ENCODE measurements at regions of chr11 and their contacts with region 1.

Region 1: DNA sequence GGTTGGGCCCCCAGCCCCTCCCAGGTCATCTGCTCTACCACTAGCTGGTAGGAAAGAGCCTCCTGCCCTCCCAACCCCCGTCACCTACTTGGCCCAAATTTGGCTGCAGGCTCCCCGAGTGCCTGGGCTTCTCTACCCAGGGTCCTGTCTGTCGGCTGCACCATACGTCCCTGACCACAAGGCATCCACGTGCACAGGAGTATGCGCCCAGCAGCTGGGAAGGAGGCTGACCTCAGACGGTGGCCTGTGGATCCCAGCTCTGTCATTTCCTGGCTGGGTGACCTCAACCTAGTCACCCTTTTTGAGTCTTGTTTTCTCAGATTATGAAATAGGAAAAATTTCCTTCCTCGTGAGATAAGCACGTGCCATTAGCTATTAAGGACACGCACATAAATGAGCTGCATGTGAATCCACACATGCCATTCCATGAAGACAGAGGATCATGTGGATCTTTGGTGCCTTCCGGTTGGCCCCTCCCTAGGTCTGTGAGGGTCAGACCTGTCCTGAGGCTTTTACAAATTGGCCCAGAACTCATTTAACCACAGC is 13.7 kb downstream of the CYB561A3 start:
- DNase-seq: no peak
- CTCF ChIP-seq: no peak

Region 2: DNA sequence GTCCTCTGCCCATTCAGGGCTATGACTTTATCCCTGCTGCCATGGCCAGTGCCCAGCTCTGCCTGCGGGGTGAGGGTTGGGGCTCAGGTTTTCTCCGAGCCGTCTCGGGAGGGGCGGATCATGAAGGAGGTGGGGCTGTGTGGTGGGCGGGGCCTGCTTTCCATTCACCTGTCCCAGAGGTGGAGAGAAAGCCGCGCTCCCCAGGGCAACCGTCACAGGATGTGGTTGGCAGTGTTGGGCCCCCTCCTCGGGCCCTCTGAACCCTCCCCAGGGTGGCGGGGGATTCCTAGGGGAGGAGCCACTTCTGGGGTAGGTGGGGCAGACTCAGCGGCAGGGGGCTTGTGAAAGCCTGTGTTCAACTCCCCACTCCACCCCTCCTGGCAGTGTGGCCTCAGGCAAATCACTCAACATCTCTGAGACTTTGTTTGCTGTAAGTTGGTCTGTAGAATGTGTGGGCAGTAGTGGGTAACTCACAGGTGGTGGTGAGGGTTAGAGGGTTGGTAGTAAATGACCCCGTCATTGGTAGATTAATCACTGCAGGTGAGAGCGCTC is 326.3 kb before region 1 on chr11:
- CTCF ChIA-PET with region 1: no interaction called
- POLR2A ChIA-PET with region 1: no interaction called
- DNase-seq: no peak
- CTCF ChIP-seq: no peak

Region 3: DNA sequence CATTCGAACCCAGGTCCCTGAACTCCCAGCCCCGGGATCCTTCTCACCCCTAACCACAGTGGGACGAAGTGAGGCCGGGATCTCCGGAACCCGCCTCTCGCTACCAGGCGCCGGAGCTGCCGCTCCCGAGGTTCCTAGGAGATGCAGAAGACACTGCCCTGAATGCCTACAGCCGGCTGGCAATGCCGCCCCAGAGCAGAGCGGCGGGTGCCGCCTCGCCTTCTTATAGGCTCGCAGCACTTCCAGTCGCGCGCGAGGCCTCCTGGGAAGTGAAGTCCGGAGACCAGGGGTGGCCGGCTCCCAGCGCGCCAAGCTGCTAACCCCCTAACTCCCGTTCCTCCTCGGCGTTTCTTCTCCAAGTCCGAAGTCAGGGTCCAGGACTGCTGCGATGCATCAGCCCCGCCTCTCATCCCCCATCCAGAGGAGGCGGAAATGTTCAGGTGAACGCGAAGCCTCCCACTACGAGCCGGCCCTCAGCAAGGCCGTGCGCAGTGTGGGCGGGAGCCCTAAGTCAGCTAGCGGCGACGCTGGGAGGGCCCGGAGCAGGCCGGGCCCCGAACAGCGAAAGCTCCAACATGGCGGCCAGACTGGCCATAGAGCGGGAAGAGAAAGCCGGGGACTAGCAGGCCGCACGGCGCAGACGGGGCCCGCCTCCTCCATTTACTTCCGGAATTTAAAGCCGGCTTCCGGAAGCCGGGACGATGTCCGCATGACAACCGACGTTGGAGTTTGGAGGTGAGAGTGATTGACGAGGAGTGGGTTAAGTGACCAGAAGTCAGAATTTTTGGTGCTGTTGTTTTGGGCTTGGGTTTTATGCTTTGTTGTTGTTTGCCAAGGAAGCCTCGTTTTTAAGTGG is 13.9 kb after region 1 on chr11 and contains the starts of genes CYB561A3 and TMEM138:
- CTCF ChIA-PET with region 1: interaction called, 374 read pairs
- POLR2A ChIA-PET with region 1: interaction called, 7 read pairs
- DNase-seq: peak; percentile 92
- CTCF ChIP-seq: no peak

Region 4: GRCh38 chr11:61598886-61599868 is 251.2 kb after region 1 on chr11:
- CTCF ChIA-PET with region 1: no interaction called
- POLR2A ChIA-PET with region 1: no interaction called
- DNase-seq: no peak
- CTCF ChIP-seq: no peak